Mammary epithelial cell (primary cell): ENCODE measurements at regions of chr15 and their contacts with region 1.

Region 1: GRCh38 chr15:89690276-89691218 is at the starts of genes PEX11A and WDR93:
- DNase-seq: peak; percentile 76
- H3K4me3 ChIP-seq: peak within 1 kb of the TSS; percentile 78 to 82 (median 81)
- H3K27ac ChIP-seq: peak within 1 kb of the TSS; percentile 21
- H3K4me1 ChIP-seq: no peaks in the 10 kb centered on the region
- H3K27me3 ChIP-seq: no peaks in the 10 kb centered on the region
- CTCF ChIP-seq: no peak
- total RNA-seq, gene PEX11A: 4.3 to 7.3 TPM
- total RNA-seq, gene WDR93: 0.17 TPM in 1 of 2 donors, not detected in the other

Region 2: DNA sequence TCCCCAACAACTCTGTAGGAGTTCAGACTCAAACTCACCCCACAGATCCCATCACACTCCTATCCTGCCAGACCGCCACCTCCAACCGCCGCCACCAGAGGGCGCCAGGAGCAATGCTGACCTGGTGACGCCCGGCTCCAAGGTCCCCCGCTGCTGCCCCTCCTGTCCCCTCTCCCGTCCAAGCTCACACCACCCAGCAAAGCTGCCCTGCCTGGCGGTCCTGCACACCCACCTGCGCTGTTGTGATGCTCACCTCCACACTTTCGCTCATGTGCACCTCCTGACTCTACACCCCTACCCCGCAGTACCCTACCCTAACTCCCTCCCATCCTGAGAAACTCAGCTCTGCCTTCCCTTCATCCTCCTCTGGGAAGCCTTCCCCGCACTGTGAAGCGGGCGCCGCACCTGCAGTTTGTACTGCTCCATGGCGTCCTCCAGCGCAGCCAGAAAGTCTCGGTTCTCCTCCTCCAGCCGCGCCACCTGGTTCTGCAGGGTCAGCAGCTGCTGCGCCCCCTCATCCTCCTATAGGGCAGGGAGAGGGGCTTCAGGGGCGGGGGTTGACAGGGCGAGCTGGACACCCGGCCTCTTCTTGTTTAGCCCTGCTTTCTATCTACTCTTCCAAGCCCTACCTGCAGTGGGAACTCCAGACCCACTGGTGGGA is 43.2 kb before region 1 on chr15:
- CTCF ChIA-PET with region 1: no interaction called
- dilution Hi-C with region 1: no loop called
- in situ Hi-C with region 1: no loop called
- intact Hi-C with region 1: loop called (anchors 1 kb)
- DNase-seq: peak; percentile 23
- H3K4me3 ChIP-seq: no peak overlapping the region
- H3K27ac ChIP-seq: no peak overlapping the region
- H3K4me1 ChIP-seq: no peaks in the 10 kb centered on the region
- H3K27me3 ChIP-seq: no peaks in the 10 kb centered on the region
- CTCF ChIP-seq: peak; percentile 80 to 92